ENCODE measurements at regions of chr1 and their contacts with region 1.

Region 1: GRCh38 chr1:186618401-186619170 is 61.6 kb downstream of the PTGS2 start:
- DNase-seq: peak; percentile 60
- H3K4me3 Mint-ChIP-seq: no peak overlapping the region
- H3K27ac Mint-ChIP-seq: no peak overlapping the region
- H3K4me1 Mint-ChIP-seq: peaks cover 33% of the 10 kb centered on the region
- H3K27me3 Mint-ChIP-seq: peaks cover 1% of the 10 kb centered on the region

Region 2: DNA sequence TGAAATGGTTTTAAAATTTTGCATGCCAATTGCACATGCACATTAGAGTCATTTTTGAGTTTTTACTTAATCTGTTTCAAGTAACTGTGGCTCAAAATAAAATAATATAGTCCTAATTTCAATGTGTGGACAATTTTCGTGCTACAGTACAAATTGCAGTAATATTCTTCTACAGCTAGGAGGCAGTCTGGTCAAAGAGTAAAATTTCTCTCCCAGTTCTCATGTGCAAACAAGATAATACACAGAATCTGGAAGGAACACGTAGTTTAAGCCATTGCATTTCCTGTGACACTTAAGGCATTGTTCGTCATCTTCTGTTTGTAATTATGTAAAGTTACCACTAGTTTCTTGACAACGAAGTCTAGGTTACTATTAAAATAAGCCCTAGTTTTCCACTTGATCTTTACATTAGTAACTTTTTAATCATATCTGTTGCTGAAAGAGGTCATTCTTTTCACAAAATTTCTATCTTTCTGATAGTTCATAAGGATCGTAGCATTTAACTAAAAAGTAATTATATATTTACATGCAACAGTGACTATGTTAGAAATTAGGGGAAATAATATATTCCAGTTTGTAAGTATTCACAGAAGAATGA is 214.0 kb before region 1 on chr1:
- CTCF ChIA-PET with region 1: no interaction called
- POLR2A ChIA-PET with region 1: no interaction called
- intact Hi-C with region 1: loop called (anchors 10 kb)
- DNase-seq: no peak
- H3K4me3 Mint-ChIP-seq: no peak overlapping the region
- H3K27ac Mint-ChIP-seq: no peak overlapping the region
- H3K4me1 Mint-ChIP-seq: no peaks in the 10 kb centered on the region
- H3K27me3 Mint-ChIP-seq: no peaks in the 10 kb centered on the region

Region 3: GRCh38 chr1:186482661-186483255 is 135.8 kb before region 1 on chr1:
- CTCF ChIA-PET with region 1: no interaction called
- POLR2A ChIA-PET with region 1: no interaction called
- intact Hi-C with region 1: loop called (anchors 10 kb)
- DNase-seq: peak; percentile 53
- H3K4me3 Mint-ChIP-seq: no peak overlapping the region
- H3K27ac Mint-ChIP-seq: no peak overlapping the region
- H3K4me1 Mint-ChIP-seq: no peaks in the 10 kb centered on the region
- H3K27me3 Mint-ChIP-seq: no peaks in the 10 kb centered on the region

Region 4: GRCh38 chr1:186643600-186643999 is 25.0 kb after region 1 on chr1:
- CTCF ChIA-PET with region 1: no interaction called
- POLR2A ChIA-PET with region 1: no interaction called
- intact Hi-C with region 1: no loop called
- DNase-seq: no peak
- H3K4me3 Mint-ChIP-seq: no peak overlapping the region
- H3K27ac Mint-ChIP-seq: no peak overlapping the region
- H3K4me1 Mint-ChIP-seq: no peaks in the 10 kb centered on the region
- H3K27me3 Mint-ChIP-seq: no peaks in the 10 kb centered on the region

Region 5: GRCh38 chr1:186662740-186663139 is 44.2 kb after region 1 on chr1:
- CTCF ChIA-PET with region 1: no interaction called
- POLR2A ChIA-PET with region 1: no interaction called
- intact Hi-C with region 1: no loop called
- DNase-seq: no peak
- H3K4me3 Mint-ChIP-seq: no peak overlapping the region
- H3K27ac Mint-ChIP-seq: no peak overlapping the region
- H3K4me1 Mint-ChIP-seq: no peaks in the 10 kb centered on the region
- H3K27me3 Mint-ChIP-seq: peaks cover 4% of the 10 kb centered on the region

Region 6: DNA sequence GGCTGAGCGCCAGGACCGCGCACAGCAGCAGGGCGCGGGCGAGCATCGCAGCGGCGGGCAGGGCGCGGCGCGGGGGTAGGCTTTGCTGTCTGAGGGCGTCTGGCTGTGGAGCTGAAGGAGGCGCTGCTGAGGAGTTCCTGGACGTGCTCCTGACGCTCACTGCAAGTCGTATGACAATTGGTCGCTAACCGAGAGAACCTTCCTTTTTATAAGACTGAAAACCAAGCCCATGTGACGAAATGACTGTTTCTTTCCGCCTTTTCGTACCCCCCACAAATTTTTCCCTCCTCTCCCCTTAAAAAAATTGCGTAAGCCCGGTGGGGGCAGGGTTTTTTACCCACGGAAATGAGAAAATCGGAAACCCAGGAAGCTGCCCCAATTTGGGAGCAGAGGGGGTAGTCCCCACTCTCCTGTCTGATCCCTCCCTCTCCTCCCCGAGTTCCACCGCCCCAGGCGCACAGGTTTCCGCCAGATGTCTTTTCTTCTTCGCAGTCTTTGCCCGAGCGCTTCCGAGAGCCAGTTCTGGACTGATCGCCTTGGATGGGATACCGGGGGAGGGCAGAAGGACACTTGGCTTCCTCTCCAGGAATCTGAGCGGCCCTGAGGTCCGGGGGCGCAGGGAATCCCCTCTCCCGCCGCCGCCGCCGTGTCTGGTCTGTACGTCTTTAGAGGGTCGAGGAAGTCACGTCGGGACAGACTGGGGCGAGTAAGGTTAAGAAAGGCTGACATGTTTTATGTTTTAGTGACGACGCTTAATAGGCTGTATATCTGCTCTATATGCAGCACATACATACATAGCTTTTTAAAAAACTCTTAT is 61.9 kb after region 1 on chr1 and contains the start of gene PTGS2:
- CTCF ChIA-PET with region 1: no interaction called
- POLR2A ChIA-PET with region 1: no interaction called
- intact Hi-C with region 1: loop called (anchors 5 kb)
- DNase-seq: peak; percentile 57
- H3K4me3 Mint-ChIP-seq: peak within 1 kb of the TSS; percentile 68
- H3K27ac Mint-ChIP-seq: no peak within 1 kb of the TSS
- H3K4me1 Mint-ChIP-seq: peaks cover 8% of the 10 kb centered on the region
- H3K27me3 Mint-ChIP-seq: peaks cover 38% of the 10 kb centered on the region
- total RNA-seq, gene PTGS2: 2.8 to 2.9 TPM

Region 7: DNA sequence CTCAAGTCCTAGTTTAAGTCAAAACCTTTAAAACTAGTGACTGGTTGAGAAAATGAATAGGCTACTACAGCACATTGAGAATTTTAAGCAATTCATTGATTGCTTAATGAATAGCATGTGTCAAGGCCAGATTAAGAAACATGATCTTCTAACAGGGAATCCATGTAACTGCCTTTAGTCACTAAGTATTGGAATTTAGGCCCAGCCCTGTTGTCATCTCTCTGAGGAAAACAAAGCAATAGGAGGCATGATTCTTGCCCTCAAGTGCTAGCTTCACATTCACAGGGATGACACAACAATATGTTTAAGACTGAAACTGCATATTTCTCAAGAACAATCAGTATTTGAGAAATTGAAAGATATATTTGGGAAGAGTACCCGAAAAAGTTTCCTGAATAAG is 131.7 kb after region 1 on chr1:
- CTCF ChIA-PET with region 1: no interaction called
- POLR2A ChIA-PET with region 1: no interaction called
- intact Hi-C with region 1: no loop called
- DNase-seq: no peak
- H3K4me3 Mint-ChIP-seq: no peak overlapping the region
- H3K27ac Mint-ChIP-seq: no peak overlapping the region
- H3K4me1 Mint-ChIP-seq: no peaks in the 10 kb centered on the region
- H3K27me3 Mint-ChIP-seq: peaks cover 2% of the 10 kb centered on the region

Measured in activated CD4-positive, alpha-beta memory T cell treated with anti-CD3 and anti-CD28 coated beads for 36 hours (primary cell).